ENCODE measurements at regions of chr12 and their contacts with region 1.

Region 1: GRCh38 chr12:55073043-55074022 is 52.9 kb upstream of the OR9K2 start:
- DNase-seq: peak in 1 of 2 experiments; percentile 81
- H3K4me3 ChIP-seq: no peak overlapping the region
- H3K27ac ChIP-seq: no peak overlapping the region
- H3K4me1 ChIP-seq: no peaks in the 10 kb centered on the region
- H3K27me3 ChIP-seq: no peaks in the 10 kb centered on the region
- CTCF ChIP-seq: peak; percentile 34 to 86 (median 74)
- EP300 ChIP-seq: no peak
- POLR2A ChIP-seq: no peak
- RAD21 ChIP-seq: peak; percentile 96

Region 2: DNA sequence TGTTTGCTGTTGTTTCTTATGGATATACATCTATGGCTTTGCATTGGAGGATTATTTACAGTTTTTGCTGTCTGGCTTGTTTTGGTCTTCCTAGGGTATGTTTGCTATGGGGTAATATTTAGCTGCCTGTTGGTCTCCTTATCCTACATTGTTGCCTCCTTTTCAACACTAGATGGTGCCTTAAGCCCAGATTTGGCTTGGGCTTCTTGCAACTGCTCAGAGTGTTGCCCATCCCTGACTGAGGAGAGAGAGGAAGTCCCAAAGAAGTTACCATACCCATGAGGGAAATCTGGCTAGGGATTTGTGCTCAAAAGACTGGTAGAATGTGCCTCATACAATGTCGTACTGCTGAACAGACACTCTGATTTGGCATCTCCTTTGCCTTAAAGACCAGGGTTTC is 313.6 kb before region 1 on chr12:
- CTCF ChIA-PET with region 1: interaction called, 10 read pairs
- POLR2A ChIA-PET with region 1: no interaction called
- DNase-seq: peak; percentile 25 to 44
- H3K4me3 ChIP-seq: no peak overlapping the region
- H3K27ac ChIP-seq: no peak overlapping the region
- H3K4me1 ChIP-seq: no peaks in the 10 kb centered on the region
- H3K27me3 ChIP-seq: no peaks in the 10 kb centered on the region
- CTCF ChIP-seq: peak in 2 of 3 experiments; percentile 73 to 90; a peak in 3 of 4 replicates
- EP300 ChIP-seq: no peak
- POLR2A ChIP-seq: no peak
- RAD21 ChIP-seq: peak; percentile 93 to 97

Region 3: DNA sequence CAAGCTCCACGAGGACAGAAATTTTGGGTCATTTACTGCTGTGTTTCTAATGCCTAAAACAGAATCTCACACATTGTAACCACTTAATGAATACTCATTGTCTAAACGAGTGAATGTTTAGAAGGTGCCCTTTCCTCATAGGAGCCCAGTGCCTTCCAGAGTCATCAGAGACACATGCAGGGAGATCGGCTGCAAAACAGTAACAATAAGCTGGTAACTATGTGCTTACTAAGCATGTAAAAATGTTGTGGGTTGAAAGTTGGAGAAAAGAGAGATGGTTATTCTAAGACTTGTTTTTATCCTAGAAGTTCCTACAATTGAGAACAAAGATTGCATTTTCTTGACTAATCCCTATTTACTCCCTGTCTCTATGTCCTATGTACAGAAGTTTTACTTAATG is 96.2 kb before region 1 on chr12:
- CTCF ChIA-PET with region 1: interaction called, 40 read pairs
- POLR2A ChIA-PET with region 1: no interaction called
- DNase-seq: no peak
- H3K4me3 ChIP-seq: no peak overlapping the region
- H3K27ac ChIP-seq: no peak overlapping the region
- H3K4me1 ChIP-seq: peaks cover 0 to 4% (median 1%) of the 10 kb centered on the region in 4 experiments; a peak in 1 of 7 replicates
- H3K27me3 ChIP-seq: no peaks in the 10 kb centered on the region
- CTCF ChIP-seq: no peak
- EP300 ChIP-seq: no peak
- POLR2A ChIP-seq: no peak
- RAD21 ChIP-seq: no peak

Region 4: GRCh38 chr12:55001198-55001868 is 72.0 kb before region 1 on chr12:
- CTCF ChIA-PET with region 1: interaction called, 627 read pairs
- POLR2A ChIA-PET with region 1: interaction called, 12 read pairs
- DNase-seq: no peak
- H3K4me3 ChIP-seq: no peak overlapping the region
- H3K27ac ChIP-seq: no peak overlapping the region
- H3K4me1 ChIP-seq: peaks cover 3 to 15% (median 11%) of the 10 kb centered on the region in 4 experiments; a peak in 5 of 7 replicates
- H3K27me3 ChIP-seq: no peaks in the 10 kb centered on the region
- CTCF ChIP-seq: no peak
- EP300 ChIP-seq: no peak
- POLR2A ChIP-seq: no peak
- RAD21 ChIP-seq: no peak

Region 5: GRCh38 chr12:55043542-55043941 is 29.8 kb before region 1 on chr12:
- CTCF ChIA-PET with region 1: interaction called, 29 read pairs
- POLR2A ChIA-PET with region 1: interaction called, 3 read pairs
- DNase-seq: no peak
- H3K4me3 ChIP-seq: no peak overlapping the region
- H3K27ac ChIP-seq: no peak overlapping the region
- H3K4me1 ChIP-seq: peaks cover 0 to 7% (median 3%) of the 10 kb centered on the region in 4 experiments; a peak in 3 of 7 replicates
- H3K27me3 ChIP-seq: no peaks in the 10 kb centered on the region
- CTCF ChIP-seq: no peak
- EP300 ChIP-seq: no peak
- POLR2A ChIP-seq: no peak
- RAD21 ChIP-seq: no peak

Region 6: GRCh38 chr12:55142669-55143565 is 69.6 kb after region 1 on chr12:
- CTCF ChIA-PET with region 1: interaction called, 14 read pairs
- POLR2A ChIA-PET with region 1: no interaction called
- DNase-seq: peak; percentile 5 to 61
- H3K4me3 ChIP-seq: no peak overlapping the region
- H3K27ac ChIP-seq: no peak overlapping the region
- H3K4me1 ChIP-seq: no peaks in the 10 kb centered on the region
- H3K27me3 ChIP-seq: no peaks in the 10 kb centered on the region
- CTCF ChIP-seq: peak in 2 of 3 experiments; percentile 67 to 73; a peak in 3 of 4 replicates
- EP300 ChIP-seq: no peak
- POLR2A ChIP-seq: no peak
- RAD21 ChIP-seq: peak; percentile 80 to 88

Measured in H1 (cell line).